Mammary epithelial cell (primary cell): ENCODE measurements at regions of chr10 and their contacts with region 1.

Region 1: GRCh38 chr10:117477961-117478670 is 64.4 kb upstream of the EMX2 start:
- DNase-seq: peak; percentile 91
- H3K4me3 ChIP-seq: no peak overlapping the region
- H3K27ac ChIP-seq: no peak overlapping the region
- H3K4me1 ChIP-seq: peaks cover 8% of the 10 kb centered on the region
- H3K27me3 ChIP-seq: no peaks in the 10 kb centered on the region
- CTCF ChIP-seq: peak; percentile 66 to 67

Region 2: GRCh38 chr10:117216611-117217195 is 261.4 kb before region 1 on chr10:
- CTCF ChIA-PET with region 1: no interaction called
- dilution Hi-C with region 1: no loop called
- in situ Hi-C with region 1: loop called in 1 of 2 experiments (anchors 10 kb)
- intact Hi-C with region 1: loop called (anchors 2 kb)
- DNase-seq: peak; percentile 59
- H3K4me3 ChIP-seq: peak overlapping the region; percentile 51 to 68 (median 56)
- H3K27ac ChIP-seq: no peak overlapping the region
- H3K4me1 ChIP-seq: peaks cover 18% of the 10 kb centered on the region
- H3K27me3 ChIP-seq: no peaks in the 10 kb centered on the region
- CTCF ChIP-seq: peak; percentile 85 to 100

Region 3: GRCh38 chr10:117375360-117376178 is 102.5 kb before region 1 on chr10 and contains the start of gene PDZD8:
- CTCF ChIA-PET with region 1: no interaction called
- dilution Hi-C with region 1: no loop called
- in situ Hi-C with region 1: no loop called
- intact Hi-C with region 1: loop called (anchors 5 kb)
- DNase-seq: peak; percentile 90
- H3K4me3 ChIP-seq: peak within 1 kb of the TSS; percentile 86 to 99 (median 98)
- H3K27ac ChIP-seq: peak within 1 kb of the TSS; percentile 57
- H3K4me1 ChIP-seq: peaks cover 15% of the 10 kb centered on the region
- H3K27me3 ChIP-seq: no peaks in the 10 kb centered on the region
- CTCF ChIP-seq: no peak
- total RNA-seq, gene PDZD8: 48.6 to 63.0 TPM

Region 4: DNA sequence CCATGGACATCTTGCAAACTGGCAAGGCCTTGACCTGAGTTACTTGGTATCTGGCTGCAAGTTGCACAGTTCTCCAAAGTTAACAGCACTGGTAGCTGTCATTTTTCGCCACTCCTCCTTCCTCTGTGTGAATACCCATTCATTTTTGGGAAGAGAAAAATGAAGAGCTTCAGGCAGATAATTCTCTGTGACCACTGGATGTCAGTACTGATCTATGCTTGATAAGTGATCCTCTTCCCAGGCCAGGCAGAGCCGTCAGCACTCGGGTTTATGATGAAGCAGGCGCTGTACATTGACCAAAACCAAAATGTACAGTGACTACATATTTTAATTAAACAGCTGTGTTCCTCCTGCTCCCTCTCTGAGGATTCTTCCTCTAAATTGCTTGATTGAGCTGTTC is 47.0 kb before region 1 on chr10:
- CTCF ChIA-PET with region 1: interaction called, 21 read pairs
- dilution Hi-C with region 1: no loop called
- in situ Hi-C with region 1: no loop called
- intact Hi-C with region 1: loop called (anchors 1 kb)
- DNase-seq: peak; percentile 60
- H3K4me3 ChIP-seq: no peak overlapping the region
- H3K27ac ChIP-seq: no peak overlapping the region
- H3K4me1 ChIP-seq: no peaks in the 10 kb centered on the region
- H3K27me3 ChIP-seq: no peaks in the 10 kb centered on the region
- CTCF ChIP-seq: peak; percentile 39 to 57

Region 5: DNA sequence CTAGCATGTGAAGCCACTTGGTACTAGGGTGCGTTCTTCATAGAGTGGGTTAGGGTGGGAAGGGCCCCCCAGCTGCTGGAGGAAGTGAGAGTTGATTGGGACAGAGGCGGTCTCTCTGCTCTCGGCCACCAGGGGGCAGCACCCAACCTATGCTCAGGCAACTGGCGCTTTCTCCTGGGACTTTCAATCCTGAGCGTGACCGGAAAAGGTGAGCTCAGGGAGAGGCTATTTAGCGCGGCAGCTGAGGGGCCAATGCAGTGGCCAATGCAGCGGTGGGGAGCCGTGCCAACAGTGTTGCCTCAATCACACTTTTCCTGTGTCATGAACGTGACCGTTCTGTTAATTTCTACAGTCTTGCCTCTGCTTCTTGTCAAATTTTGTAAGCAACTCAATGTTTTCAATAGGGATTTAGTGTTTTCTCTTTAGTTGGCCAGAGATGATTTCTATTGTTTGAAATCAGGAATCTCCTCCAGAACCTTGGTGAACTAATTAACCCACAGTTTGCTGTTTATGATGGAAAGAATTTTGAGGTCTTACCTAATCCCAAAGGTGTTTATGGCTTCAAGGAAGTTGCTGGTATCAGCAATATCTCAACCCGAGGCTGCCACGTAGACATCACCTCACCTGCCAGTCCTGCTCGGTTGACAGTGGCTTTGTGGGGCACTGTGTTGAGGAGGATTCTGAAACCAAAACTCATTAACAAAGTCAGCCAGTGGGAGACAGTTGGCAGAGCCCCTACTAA is 35.0 kb before region 1 on chr10:
- CTCF ChIA-PET with region 1: interaction called, 4 read pairs
- dilution Hi-C with region 1: no loop called
- in situ Hi-C with region 1: no loop called
- intact Hi-C with region 1: loop called (anchors 1 kb)
- DNase-seq: peak; percentile 78
- H3K4me3 ChIP-seq: no peak overlapping the region
- H3K27ac ChIP-seq: peak overlapping the region; percentile 62
- H3K4me1 ChIP-seq: peaks cover 42% of the 10 kb centered on the region
- H3K27me3 ChIP-seq: no peaks in the 10 kb centered on the region
- CTCF ChIP-seq: peak; percentile 79 to 84

Region 6: DNA sequence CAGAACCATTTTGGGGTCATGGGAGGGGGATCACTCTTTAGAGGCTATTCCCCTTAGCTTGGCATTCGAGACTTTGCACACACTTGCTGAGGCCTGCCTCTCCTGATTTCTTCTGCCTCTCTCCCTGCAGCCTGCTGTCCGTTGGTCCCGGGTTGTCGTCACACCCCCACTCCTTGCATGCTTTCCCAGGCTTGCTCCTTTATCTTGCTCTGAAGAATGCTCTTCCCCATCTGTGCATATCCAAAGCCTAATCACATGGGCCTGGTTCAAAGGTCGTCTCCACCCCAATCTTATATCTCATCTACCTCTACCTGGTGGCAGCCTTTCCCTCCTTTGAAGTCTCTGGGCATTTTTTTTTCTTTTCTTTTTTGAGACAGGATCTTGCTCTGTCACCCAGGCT is 40.1 kb after region 1 on chr10:
- CTCF ChIA-PET with region 1: no interaction called
- dilution Hi-C with region 1: no loop called
- in situ Hi-C with region 1: no loop called
- intact Hi-C with region 1: no loop called
- DNase-seq: no peak
- H3K4me3 ChIP-seq: no peak overlapping the region
- H3K27ac ChIP-seq: no peak overlapping the region
- H3K4me1 ChIP-seq: no peaks in the 10 kb centered on the region
- H3K27me3 ChIP-seq: peaks cover 9% of the 10 kb centered on the region
- CTCF ChIP-seq: no peak

Region 7: DNA sequence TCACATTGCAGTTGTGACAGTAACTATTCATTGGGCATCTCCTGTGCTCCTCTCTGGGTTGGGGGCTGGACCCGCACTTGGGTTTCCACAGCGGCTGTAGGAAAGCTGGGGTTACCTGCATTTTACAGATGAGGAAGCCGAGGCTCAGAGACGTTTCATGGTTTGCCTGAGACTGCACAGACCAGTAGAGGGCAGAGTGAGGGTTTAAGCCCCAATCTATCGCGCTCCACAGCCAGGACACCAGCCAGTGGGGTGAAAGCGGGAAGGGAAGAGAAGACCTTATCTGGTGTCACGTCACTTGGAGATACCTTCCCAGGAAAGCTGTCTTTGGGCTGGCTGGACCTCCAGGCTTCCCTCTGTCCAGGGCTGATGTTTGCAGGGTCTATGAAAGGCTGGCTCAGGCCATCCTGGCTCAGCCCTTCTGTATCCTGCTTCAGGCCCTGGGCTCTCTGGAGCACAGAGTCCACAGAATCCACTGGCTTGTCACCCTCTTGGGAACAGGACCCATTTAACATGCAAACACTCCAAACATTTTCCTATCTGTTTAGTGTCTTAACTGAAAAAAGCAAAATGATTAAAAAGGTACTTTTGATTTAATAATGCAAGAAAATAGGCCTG is 232.2 kb after region 1 on chr10:
- CTCF ChIA-PET with region 1: no interaction called
- dilution Hi-C with region 1: no loop called
- in situ Hi-C with region 1: no loop called
- intact Hi-C with region 1: no loop called
- DNase-seq: no peak
- H3K4me3 ChIP-seq: no peak overlapping the region
- H3K27ac ChIP-seq: no peak overlapping the region
- H3K4me1 ChIP-seq: no peaks in the 10 kb centered on the region
- H3K27me3 ChIP-seq: no peaks in the 10 kb centered on the region
- CTCF ChIP-seq: peak in 1 of 2 donors; percentile 11

Region 8: GRCh38 chr10:117804470-117805011 is 326.4 kb after region 1 on chr10:
- CTCF ChIA-PET with region 1: no interaction called
- dilution Hi-C with region 1: no loop called
- in situ Hi-C with region 1: no loop called
- intact Hi-C with region 1: no loop called
- DNase-seq: no peak
- H3K4me3 ChIP-seq: no peak overlapping the region
- H3K27ac ChIP-seq: no peak overlapping the region
- H3K4me1 ChIP-seq: no peaks in the 10 kb centered on the region
- H3K27me3 ChIP-seq: no peaks in the 10 kb centered on the region
- CTCF ChIP-seq: no peak